ENCODE measurements at regions of chr19 and their contacts with region 1.

Region 1: DNA sequence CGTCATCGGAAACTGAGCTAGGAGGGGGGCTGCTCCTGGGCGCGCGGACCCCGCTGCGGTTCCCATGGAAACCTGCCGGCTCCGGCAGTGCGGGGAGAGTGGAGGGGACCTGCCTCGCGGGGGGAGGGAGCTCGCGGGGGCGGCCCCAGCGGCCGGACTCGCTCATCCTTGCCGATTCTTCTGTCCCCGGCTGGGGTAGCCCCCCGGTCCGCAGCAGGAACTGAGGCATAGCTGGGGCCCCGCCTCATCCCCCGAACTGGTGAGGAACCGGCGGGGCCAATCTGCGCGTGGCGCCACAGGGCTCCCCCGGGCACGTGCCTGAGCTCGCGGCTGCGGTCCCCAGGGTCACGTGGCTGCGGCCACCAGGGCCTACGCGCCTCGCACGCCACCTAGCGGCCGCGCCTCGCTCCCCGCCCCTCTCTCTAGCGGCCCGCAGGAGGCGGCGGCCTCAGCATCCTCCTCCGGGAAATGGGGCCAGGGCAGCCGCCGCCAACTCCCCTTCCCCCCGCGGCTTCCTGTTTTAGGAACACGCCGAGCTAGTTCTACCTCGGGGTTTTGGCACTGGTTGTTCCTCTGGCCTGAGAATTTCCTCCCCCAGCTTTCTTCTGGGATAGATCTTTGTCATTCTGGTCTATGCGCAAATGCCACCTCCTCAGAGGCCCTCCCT is 1.7 kb upstream of the ELAVL3 start:
- DNase-seq: peak; percentile 91
- ATAC-seq: peak; percentile 80
- H3K4me3 Mint-ChIP-seq: peak overlapping the region; percentile 70
- H3K27ac Mint-ChIP-seq: peak overlapping the region; percentile 72
- H3K4me1 Mint-ChIP-seq: peaks cover 28% of the 10 kb centered on the region
- H3K27me3 Mint-ChIP-seq: peaks cover 27% of the 10 kb centered on the region

Region 2: GRCh38 chr19:11293433-11294389 is 188.8 kb before region 1 on chr19:
- CTCF ChIA-PET with region 1: interaction called, 14 read pairs
- POLR2A ChIA-PET with region 1: no interaction called
- DNase-seq: peak; percentile 86
- ATAC-seq: peak; percentile 98
- H3K4me3 Mint-ChIP-seq: peak overlapping the region; percentile 54
- H3K27ac Mint-ChIP-seq: no peak overlapping the region
- H3K4me1 Mint-ChIP-seq: peaks cover 10% of the 10 kb centered on the region
- H3K27me3 Mint-ChIP-seq: peaks cover 23% of the 10 kb centered on the region

Region 3: GRCh38 chr19:11547929-11548700 is 65.6 kb after region 1 on chr19:
- CTCF ChIA-PET with region 1: no interaction called
- POLR2A ChIA-PET with region 1: no interaction called
- DNase-seq: no peak
- ATAC-seq: no peak
- H3K4me3 Mint-ChIP-seq: no peak overlapping the region
- H3K27ac Mint-ChIP-seq: no peak overlapping the region
- H3K4me1 Mint-ChIP-seq: peaks cover 3% of the 10 kb centered on the region
- H3K27me3 Mint-ChIP-seq: no peaks in the 10 kb centered on the region